Activated CD8-positive, alpha-beta T cell treated with anti-CD3 and anti-CD28 coated beads, Interleukin-2, amount 10 ng/mL, durations not matched to agents 7 days and 5 days (primary cell): ENCODE measurements at regions of chr9 and their contacts with region 1.

Region 1: GRCh38 chr9:113657703-113658544 is 194.4 kb downstream of the RGS3 start:
- DNase-seq: peak; percentile 84
- ATAC-seq: peak; percentile 91
- H3K4me3 Mint-ChIP-seq: no peak overlapping the region
- H3K27ac Mint-ChIP-seq: no peak overlapping the region
- H3K4me1 Mint-ChIP-seq: peaks cover 2% of the 10 kb centered on the region
- H3K27me3 Mint-ChIP-seq: peaks cover 27% of the 10 kb centered on the region

Region 2: GRCh38 chr9:113309204-113309813 is 348.6 kb before region 1 on chr9:
- CTCF ChIA-PET with region 1: interaction called, 24 read pairs
- POLR2A ChIA-PET with region 1: no interaction called
- DNase-seq: peak; percentile 46
- ATAC-seq: peak; percentile 53
- H3K4me3 Mint-ChIP-seq: no peak overlapping the region
- H3K27ac Mint-ChIP-seq: no peak overlapping the region
- H3K4me1 Mint-ChIP-seq: no peaks in the 10 kb centered on the region
- H3K27me3 Mint-ChIP-seq: no peaks in the 10 kb centered on the region

Region 3: DNA sequence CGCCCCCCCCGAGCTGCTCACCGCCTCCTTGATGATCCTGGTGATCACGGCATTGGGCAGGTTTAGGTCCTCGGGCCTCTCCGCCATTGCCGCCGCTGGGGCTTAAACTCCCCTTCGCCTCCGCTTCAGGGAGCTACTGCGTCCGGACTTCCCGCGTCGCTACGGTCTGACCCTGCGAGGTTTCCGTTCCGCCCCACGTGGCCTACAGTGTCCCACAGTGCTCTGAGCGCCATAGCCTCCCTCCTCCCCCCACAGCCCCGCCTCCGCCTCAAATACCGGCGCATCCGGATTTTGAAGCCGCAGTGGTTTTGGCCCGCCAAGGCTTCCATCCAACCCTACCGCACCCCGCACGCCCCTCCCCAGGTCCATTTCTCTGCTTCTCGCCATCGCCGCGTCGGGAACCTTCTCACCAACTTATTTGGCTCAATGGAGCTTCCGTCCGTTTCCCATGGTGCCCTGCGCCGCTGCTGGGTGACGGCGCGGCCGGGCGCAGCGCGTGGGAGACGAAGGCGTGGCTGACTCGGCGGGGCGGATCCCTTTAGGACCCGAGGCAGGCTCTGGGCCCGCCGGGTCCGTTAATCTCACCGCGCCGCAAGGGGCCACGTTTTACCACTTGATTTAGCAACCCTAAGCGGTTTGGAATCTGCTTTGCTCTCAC is 247.6 kb before region 1 on chr9 and contains the starts of genes C9orf43 and POLE3:
- CTCF ChIA-PET with region 1: interaction called, 75 read pairs
- POLR2A ChIA-PET with region 1: no interaction called
- DNase-seq: peak; percentile 96
- ATAC-seq: peak; percentile 95
- H3K4me3 Mint-ChIP-seq: peak within 1 kb of the TSS; percentile 88
- H3K27ac Mint-ChIP-seq: peak within 1 kb of the TSS; percentile 100
- H3K4me1 Mint-ChIP-seq: peaks cover 35% of the 10 kb centered on the region
- H3K27me3 Mint-ChIP-seq: no peaks in the 10 kb centered on the region
- total RNA-seq, gene C9orf43: 0.34 to 0.60 TPM
- total RNA-seq, gene POLE3: 78.9 to 81.7 TPM

Region 4: DNA sequence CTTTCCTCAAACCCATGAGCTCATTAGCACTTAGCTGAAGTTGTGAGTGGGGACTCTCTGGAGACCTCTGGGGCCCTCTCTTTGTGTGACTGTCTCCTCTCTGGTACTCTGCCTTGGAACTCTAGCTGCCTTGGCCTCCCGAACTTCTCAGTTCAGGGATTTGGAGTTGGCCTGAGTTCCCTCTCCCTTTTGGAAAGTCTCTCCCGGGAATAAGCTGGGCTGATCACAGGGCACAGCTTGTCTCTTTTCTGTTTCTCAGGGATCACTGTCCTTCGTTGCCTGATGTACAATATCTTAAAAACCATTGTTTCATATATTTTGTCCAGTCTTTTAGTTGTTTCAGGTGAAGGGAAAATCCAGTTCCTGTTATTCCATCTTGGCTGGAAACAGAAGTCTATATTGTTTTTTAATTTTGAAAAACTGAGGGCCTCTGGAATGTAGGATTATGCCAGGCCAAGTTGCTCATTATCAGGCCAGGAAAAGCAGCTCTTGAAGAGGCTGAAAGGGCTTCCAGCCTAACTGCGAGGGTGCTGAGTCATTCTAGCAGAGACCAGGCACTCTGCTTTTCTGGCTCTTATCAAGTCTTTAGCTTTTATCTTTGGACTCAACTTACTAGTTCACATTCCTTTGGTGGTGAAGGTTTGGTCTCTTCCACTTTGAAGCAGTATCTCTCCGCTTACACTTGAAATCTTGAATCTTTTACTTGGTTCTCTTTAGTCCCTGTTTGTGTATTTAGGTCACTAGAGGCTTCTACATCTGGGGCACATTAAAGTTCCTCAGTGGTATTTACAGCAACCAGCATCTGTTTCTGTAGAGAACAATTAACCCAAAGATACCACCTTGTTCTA is 202.8 kb before region 1 on chr9:
- CTCF ChIA-PET with region 1: interaction called, 169 read pairs
- POLR2A ChIA-PET with region 1: no interaction called
- DNase-seq: no peak
- ATAC-seq: no peak
- H3K4me3 Mint-ChIP-seq: no peak overlapping the region
- H3K27ac Mint-ChIP-seq: no peak overlapping the region
- H3K4me1 Mint-ChIP-seq: peaks cover 11% of the 10 kb centered on the region
- H3K27me3 Mint-ChIP-seq: no peaks in the 10 kb centered on the region

Region 5: GRCh38 chr9:113591001-113591898 is 66.7 kb before region 1 on chr9:
- CTCF ChIA-PET with region 1: interaction called, 116 read pairs
- POLR2A ChIA-PET with region 1: no interaction called
- DNase-seq: peak; percentile 62
- ATAC-seq: peak; percentile 35
- H3K4me3 Mint-ChIP-seq: no peak overlapping the region
- H3K27ac Mint-ChIP-seq: no peak overlapping the region
- H3K4me1 Mint-ChIP-seq: peaks cover 51% of the 10 kb centered on the region
- H3K27me3 Mint-ChIP-seq: no peaks in the 10 kb centered on the region

Region 6: GRCh38 chr9:113632776-113633590 is 24.9 kb before region 1 on chr9:
- CTCF ChIA-PET with region 1: interaction called, 14 read pairs
- POLR2A ChIA-PET with region 1: no interaction called
- DNase-seq: no peak
- ATAC-seq: no peak
- H3K4me3 Mint-ChIP-seq: no peak overlapping the region
- H3K27ac Mint-ChIP-seq: no peak overlapping the region
- H3K4me1 Mint-ChIP-seq: peaks cover 1% of the 10 kb centered on the region
- H3K27me3 Mint-ChIP-seq: peaks cover 2% of the 10 kb centered on the region

Region 7: DNA sequence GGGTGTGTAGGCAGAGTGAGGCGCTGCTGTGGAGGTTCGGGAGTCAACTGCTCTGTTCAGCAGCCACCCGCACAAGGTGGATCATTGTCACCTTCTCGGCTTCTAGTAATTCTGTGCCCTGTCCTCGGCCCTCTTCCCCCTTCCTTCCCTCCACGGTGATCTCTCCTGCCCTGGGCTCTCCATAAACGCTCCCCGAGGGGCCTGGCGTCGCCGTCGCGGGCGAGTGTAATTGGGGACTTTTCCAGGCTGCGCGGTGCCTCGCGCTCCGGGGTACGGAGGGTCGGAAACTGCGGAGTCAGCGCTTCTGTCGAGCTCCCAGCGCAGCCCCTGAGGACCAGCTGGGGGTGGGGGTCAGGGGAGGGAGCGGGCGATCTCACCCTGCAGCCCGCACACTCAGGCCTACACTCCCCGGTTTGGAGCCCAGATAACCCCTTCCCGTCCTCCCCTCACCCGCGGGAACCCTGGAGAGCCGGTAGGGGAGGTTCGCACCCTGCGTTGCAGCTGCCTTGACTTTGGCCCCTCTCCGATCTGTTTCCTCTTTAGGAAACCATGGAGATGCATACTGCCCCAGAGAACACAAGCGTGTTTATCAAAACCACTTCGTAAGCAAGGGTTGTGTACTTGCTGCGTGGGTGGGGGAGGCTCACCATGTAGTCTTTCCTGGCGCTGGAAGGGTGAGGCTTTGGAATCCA is 29.9 kb after region 1 on chr9:
- CTCF ChIA-PET with region 1: no interaction called
- POLR2A ChIA-PET with region 1: no interaction called
- DNase-seq: no peak
- ATAC-seq: no peak
- H3K4me3 Mint-ChIP-seq: no peak overlapping the region
- H3K27ac Mint-ChIP-seq: no peak overlapping the region
- H3K4me1 Mint-ChIP-seq: peaks cover 4% of the 10 kb centered on the region
- H3K27me3 Mint-ChIP-seq: peaks cover 56% of the 10 kb centered on the region